ENCODE measurements at regions of chrX and their contacts with region 1.

Region 1: GRCh38 chrX:17590892-17591740 is 146.2 kb upstream of the SCML1 start:
- DNase-seq: peak in 9 of 10 donors; percentile 21 to 55 (median 45)
- H3K4me3 ChIP-seq: peak overlapping the region in 28 of 59 donors; percentile 1 to 48 (median 26)
- H3K27ac ChIP-seq: peak overlapping the region in 1 of 59 donors; percentile 18
- H3K27me3 ChIP-seq: peaks cover 0 to 60% (median 16%) of the 10 kb centered on the region in 45 donors
- CTCF ChIP-seq: peak in 55 of 56 donors; percentile 37 to 74 (median 61)

Region 2: GRCh38 chrX:17242470-17242869 is 348.6 kb before region 1 on chrX:
- intact Hi-C with region 1: loop called in 1 of 2 experiments (anchors 5 kb)
- DNase-seq: peak in 2 of 10 donors; percentile 34 to 41
- H3K4me3 ChIP-seq: no peak overlapping the region
- H3K27ac ChIP-seq: no peak overlapping the region
- H3K27me3 ChIP-seq: peaks cover 0 to 69% (median 19%) of the 10 kb centered on the region in 45 donors
- CTCF ChIP-seq: peak; percentile 58 to 86 (median 76)

Region 3: DNA sequence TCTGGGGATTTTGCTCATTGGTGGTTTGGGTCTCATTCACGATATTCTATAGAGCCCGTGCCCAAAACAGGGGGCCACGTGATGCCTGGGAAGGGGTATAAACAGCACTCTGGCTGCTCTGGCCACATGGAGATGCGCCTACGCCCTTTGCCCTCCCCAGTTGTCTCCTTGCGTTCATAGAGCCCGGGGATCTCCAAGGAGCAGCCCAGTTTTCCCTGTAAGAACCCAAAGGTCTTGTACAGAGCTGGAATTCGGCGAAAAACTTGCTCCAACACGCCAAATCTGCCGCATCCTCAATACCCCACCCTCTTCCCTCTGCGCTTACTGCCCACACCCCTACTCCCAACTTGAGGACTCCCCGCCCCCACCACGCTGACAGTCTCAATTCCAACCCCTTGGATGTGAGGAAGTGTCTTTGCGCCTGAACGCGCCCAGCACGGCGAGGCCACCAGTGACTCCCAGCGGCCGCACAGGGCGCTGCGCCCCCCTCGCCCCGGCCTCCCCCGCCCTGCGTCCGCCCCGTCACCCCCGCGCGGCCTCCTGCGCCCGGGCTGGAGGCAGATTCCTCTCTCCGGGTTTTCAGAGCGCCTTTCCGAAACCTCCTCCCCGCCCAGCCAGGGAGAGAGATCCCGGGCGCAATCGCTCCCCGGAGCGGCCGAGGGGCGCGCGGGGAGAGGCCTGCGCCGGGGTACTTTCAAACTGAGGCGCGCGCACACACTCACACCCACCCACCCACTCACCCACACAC is 216.3 kb before region 1 on chrX and contains the start of gene NHS:
- intact Hi-C with region 1: loop called in 1 of 2 experiments (anchors 5 kb)
- DNase-seq: peak in 7 of 10 donors; percentile 21 to 53 (median 40)
- H3K4me3 ChIP-seq: peak within 1 kb of the TSS; percentile 29 to 70 (median 55)
- H3K27ac ChIP-seq: peak within 1 kb of the TSS in 11 of 59 donors; percentile 13 to 59 (median 38)
- H3K27me3 ChIP-seq: peaks cover 0 to 68% (median 17%) of the 10 kb centered on the region in 45 donors
- CTCF ChIP-seq: peak in 42 of 56 donors; percentile 10 to 59 (median 34)
- total RNA-seq, gene NHS: 2.9 to 22.7 (median 11.6) TPM

Region 4: DNA sequence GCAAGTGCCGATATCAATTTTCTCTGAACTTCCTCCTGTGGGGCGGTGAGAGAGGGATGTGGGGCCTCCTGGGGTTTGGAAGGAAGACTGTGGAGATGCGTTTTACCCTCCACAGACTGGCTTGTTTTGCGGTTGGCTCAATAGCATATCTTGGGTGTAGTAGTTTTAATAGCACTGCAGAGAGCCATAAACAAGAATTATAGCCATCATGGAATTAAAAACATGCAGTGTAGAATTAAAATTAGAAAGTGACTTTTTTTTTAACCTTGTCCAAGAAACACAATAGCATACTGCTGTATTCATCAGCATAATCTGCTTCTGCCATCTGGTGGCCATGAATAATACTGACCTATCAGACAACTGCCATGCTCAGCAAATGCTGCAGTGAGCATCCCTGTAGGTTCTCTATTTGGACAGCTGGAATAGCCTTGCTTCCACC is 98.9 kb after region 1 on chrX:
- intact Hi-C with region 1: loop called in 1 of 2 experiments (anchors 5 kb)
- DNase-seq: peak in 5 of 10 donors; percentile 21 to 63 (median 43)
- H3K4me3 ChIP-seq: no peak overlapping the region
- H3K27ac ChIP-seq: no peak overlapping the region
- H3K27me3 ChIP-seq: peaks cover 0 to 89% (median 18%) of the 10 kb centered on the region in 45 donors
- CTCF ChIP-seq: peak; percentile 28 to 88 (median 78)

Region 5: GRCh38 chrX:18119857-18120256 is 528.7 kb after region 1 on chrX:
- intact Hi-C with region 1: no loop called
- DNase-seq: no peak
- H3K4me3 ChIP-seq: no peak overlapping the region
- H3K27ac ChIP-seq: no peak overlapping the region
- H3K27me3 ChIP-seq: peaks cover 0 to 69% (median 14%) of the 10 kb centered on the region in 45 donors
- CTCF ChIP-seq: no peak